ENCODE measurements at regions of chr7 and their contacts with region 1.

Region 1: DNA sequence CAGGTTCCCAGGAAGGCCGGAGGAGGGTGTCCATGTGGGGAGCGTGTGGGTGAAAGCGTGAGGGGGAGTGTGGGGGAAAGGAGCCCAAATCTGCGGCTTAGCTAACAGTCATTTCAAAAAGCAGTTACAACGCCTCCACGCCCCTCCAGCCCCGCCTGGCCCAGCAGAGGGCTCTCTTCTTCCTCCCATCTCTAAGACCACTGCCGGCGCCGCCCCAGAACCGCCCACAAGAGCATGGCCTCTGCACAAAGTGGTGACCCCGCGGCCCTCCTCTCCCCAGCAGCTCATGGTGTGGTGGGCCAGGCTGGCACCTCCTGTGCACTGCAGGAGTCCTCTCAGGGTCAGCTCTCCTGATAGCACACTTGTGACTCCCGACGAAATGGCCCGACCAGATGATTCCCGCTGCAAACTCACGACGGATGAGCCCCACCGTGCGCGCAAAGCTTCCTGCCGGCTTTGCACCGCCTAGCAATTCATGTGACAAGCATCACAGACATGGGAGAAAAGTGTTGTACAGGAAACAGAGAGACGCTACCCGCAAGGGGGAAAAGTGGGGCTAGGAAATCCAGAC is 12.4 kb upstream of the HUS1 start:
- DNase-seq: peak; percentile 92

Region 2: GRCh38 chr7:47846117-47846836 is 145.5 kb before region 1 on chr7:
- intact Hi-C with region 1: no loop called
- DNase-seq: no peak

Region 3: GRCh38 chr7:47979145-47979831 is 12.5 kb before region 1 on chr7 and contains the start of gene HUS1:
- intact Hi-C with region 1: no loop called
- DNase-seq: peak; percentile 96
- total RNA-seq, gene HUS1: 24.1 TPM

Region 4: DNA sequence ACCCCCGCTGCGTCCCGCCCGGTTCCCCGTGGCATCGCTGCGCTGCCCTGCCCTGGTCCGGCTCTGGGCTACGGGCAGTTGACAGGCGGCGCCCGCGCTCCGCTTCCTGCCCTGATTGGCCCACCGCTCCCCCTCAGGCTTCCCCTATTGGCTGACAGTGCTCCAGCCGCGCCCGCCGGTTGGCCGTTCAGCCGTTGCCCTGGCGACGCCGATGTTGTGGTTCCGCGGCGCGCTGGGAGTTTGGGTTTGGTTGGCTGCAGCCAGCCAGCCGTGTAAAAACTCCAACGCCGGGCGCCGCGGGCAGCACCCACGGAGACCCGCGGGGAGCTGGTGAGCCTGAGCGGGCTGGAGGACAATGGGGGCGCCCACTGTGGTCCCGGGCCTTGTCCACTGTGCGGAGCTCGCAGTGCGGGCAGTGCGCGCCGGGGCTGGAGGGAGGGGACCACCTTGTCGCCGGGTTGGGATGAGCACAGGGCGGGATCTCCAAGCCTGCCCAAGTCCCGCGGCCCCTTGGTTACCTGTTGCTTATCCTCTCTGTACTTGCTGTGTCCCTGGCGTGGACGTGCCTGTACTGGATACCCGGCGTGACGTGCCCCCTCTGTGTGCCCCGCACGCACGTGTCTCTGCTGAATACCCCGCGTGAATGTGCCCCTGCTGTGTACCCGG is 43.6 kb after region 1 on chr7 and contains the start of gene C7orf57:
- intact Hi-C with region 1: loop called (anchors 5 kb)
- DNase-seq: peak; percentile 96
- total RNA-seq, gene C7orf57: not detected

Region 5: GRCh38 chr7:48088559-48089045 is 96.8 kb after region 1 on chr7:
- intact Hi-C with region 1: loop called (anchors 5 kb)
- DNase-seq: peak; percentile 96

Region 6: GRCh38 chr7:48109848-48110663 is 118.2 kb after region 1 on chr7:
- intact Hi-C with region 1: loop called (anchors 1 kb)
- DNase-seq: peak; percentile 89